Activated T-helper 1 cell treated with anti-CD3 and anti-CD28 coated beads, Interleukin-12 subunit alpha, Interleukin-12 subunit beta, Interleukin-2, Interleukin-4 antibody, amounts not matched to agents 30 ng/mL and 10 ng/mL and 1 ng/mL, durations not matched to agents 14 hours and 24 hours and 36 hours (primary cell): ENCODE measurements at regions of chr5 and their contacts with region 1.

Region 1: GRCh38 chr5:66164044-66164790 is 20.1 kb downstream of the SREK1 start:
- DNase-seq: no peak
- H3K4me3 Mint-ChIP-seq: no peak overlapping the region
- H3K27ac Mint-ChIP-seq: no peak overlapping the region
- H3K4me1 Mint-ChIP-seq: peaks cover 12% of the 10 kb centered on the region
- H3K27me3 Mint-ChIP-seq: no peaks in the 10 kb centered on the region

Region 2: GRCh38 chr5:66151030-66151429 is 13.2 kb before region 1 on chr5:
- intact Hi-C with region 1: loop called (anchors 1 kb)
- DNase-seq: no peak
- H3K4me3 Mint-ChIP-seq: no peak overlapping the region
- H3K27ac Mint-ChIP-seq: peak overlapping the region; percentile 82
- H3K4me1 Mint-ChIP-seq: peaks cover 46% of the 10 kb centered on the region
- H3K27me3 Mint-ChIP-seq: no peaks in the 10 kb centered on the region

Region 3: DNA sequence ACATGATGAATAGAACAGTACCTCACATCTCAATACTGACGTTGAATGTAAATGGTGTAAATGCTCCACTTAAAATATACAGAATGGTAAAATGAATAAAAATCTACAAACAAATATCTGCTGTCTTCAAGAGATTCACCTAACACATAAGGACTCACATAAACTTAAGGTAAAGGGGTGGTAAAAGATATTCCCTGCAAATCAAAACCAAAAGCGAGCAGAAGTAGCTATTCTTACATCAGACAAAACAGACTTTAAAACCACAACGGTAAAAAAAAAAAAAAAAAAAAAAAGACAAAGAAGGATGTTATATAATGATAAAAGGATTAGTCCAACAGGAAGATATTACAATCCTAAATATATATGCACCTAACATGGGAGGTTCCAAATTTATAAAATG is 217.9 kb after region 1 on chr5:
- intact Hi-C with region 1: no loop called
- DNase-seq: no peak
- H3K4me3 Mint-ChIP-seq: no peak overlapping the region
- H3K27ac Mint-ChIP-seq: no peak overlapping the region
- H3K4me1 Mint-ChIP-seq: no peaks in the 10 kb centered on the region
- H3K27me3 Mint-ChIP-seq: peaks cover 2% of the 10 kb centered on the region